ENCODE measurements at regions of chr14 and their contacts with region 1.

Region 1: GRCh38 chr14:61694830-61695694 is at the start of gene HIF1A:
- DNase-seq: peak; percentile 99
- H3K4me3 Mint-ChIP-seq: peak within 1 kb of the TSS; percentile 98
- H3K27ac Mint-ChIP-seq: peak within 1 kb of the TSS; percentile 98
- H3K4me1 Mint-ChIP-seq: peaks cover 49% of the 10 kb centered on the region
- H3K27me3 Mint-ChIP-seq: no peaks in the 10 kb centered on the region
- total RNA-seq, gene HIF1A: 283 to 287 TPM

Region 2: DNA sequence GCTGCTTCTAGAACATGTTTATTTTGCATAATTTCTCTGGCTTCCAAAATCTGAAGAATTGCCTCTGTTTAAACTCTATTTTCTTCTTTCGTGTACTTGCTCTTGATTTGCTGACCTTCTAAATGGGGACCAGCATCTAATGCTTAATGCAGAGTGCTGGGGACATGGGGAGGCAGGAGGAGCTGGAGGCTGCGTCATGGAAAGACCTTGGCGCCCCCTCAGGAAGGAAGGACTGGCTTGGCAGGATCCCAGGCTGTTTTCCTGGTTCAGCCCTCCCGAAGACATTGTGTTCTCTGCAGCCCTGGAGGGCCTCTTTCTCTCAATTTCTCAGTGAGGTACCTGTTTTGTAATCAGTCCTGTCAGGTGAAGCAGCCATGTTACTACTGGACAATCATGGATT is 368.2 kb before region 1 on chr14:
- CTCF ChIA-PET with region 1: no interaction called
- POLR2A ChIA-PET with region 1: interaction called, 31 read pairs
- intact Hi-C with region 1: loop called (anchors 2 kb)
- DNase-seq: no peak
- H3K4me3 Mint-ChIP-seq: peak overlapping the region; percentile 99
- H3K27ac Mint-ChIP-seq: peak overlapping the region; percentile 93
- H3K4me1 Mint-ChIP-seq: peaks cover 64% of the 10 kb centered on the region
- H3K27me3 Mint-ChIP-seq: no peaks in the 10 kb centered on the region

Region 3: DNA sequence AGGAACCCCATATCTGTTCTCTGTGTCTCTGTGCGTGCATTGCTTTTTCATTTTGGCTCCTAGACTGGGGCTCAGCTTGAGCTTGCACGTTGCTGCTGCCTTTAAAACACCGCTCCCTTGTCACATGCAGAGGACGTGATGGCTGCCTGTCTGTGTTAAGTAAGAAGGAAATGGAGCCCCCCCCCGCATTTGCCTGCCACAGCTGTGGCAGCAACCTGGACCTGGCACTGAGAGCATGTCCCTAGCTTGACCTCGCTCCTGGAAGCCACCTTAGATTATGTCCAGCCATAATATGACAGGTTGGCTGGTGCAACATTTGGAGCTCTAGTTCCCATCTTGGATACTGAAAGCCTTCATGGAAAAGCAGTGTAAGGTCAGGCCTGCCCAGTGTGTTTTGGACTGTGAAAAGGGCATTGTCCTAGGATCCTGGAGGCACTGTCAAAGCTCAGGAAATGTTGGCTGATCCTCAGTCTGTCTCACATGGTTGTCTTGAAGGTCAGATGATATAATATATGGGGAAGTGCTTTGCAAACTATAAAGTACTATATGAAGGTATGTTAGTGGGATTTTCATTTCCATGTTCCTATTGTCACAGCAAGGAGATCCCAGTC is 299.8 kb before region 1 on chr14:
- CTCF ChIA-PET with region 1: no interaction called
- POLR2A ChIA-PET with region 1: no interaction called
- intact Hi-C with region 1: no loop called
- DNase-seq: no peak
- H3K4me3 Mint-ChIP-seq: no peak overlapping the region
- H3K27ac Mint-ChIP-seq: no peak overlapping the region
- H3K4me1 Mint-ChIP-seq: peaks cover 78% of the 10 kb centered on the region
- H3K27me3 Mint-ChIP-seq: no peaks in the 10 kb centered on the region

Region 4: GRCh38 chr14:61503167-61503801 is 191.8 kb before region 1 on chr14:
- CTCF ChIA-PET with region 1: no interaction called
- POLR2A ChIA-PET with region 1: interaction called, 7 read pairs
- intact Hi-C with region 1: loop called (anchors 1 kb)
- DNase-seq: peak; percentile 90
- H3K4me3 Mint-ChIP-seq: peak overlapping the region; percentile 62
- H3K27ac Mint-ChIP-seq: peak overlapping the region; percentile 98
- H3K4me1 Mint-ChIP-seq: peaks cover 98% of the 10 kb centered on the region
- H3K27me3 Mint-ChIP-seq: no peaks in the 10 kb centered on the region

Region 5: GRCh38 chr14:61512026-61512834 is 182.8 kb before region 1 on chr14:
- CTCF ChIA-PET with region 1: no interaction called
- POLR2A ChIA-PET with region 1: interaction called, 15 read pairs
- intact Hi-C with region 1: no loop called
- DNase-seq: no peak
- H3K4me3 Mint-ChIP-seq: peak overlapping the region; percentile 51
- H3K27ac Mint-ChIP-seq: peak overlapping the region; percentile 98
- H3K4me1 Mint-ChIP-seq: peaks cover 95% of the 10 kb centered on the region
- H3K27me3 Mint-ChIP-seq: no peaks in the 10 kb centered on the region

Region 6: DNA sequence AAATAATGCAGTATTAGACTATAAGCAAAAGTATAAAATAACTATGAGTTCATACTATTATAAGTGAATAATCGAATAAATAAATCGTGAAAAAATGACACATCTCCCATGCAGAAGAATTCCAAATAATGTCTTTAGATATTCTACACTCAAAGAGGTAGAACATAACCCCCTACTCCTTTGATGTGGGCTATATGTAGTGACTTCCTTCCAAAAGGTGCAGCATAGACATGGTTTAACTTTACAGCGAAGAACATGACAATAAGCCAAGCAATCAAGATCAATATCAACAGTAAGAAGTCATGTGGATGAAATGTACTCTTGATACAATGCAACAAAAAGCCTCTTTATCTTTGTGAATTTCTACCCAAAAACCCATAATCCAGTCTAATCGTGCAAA is 45.8 kb before region 1 on chr14:
- CTCF ChIA-PET with region 1: no interaction called
- POLR2A ChIA-PET with region 1: no interaction called
- intact Hi-C with region 1: no loop called
- DNase-seq: no peak
- H3K4me3 Mint-ChIP-seq: no peak overlapping the region
- H3K27ac Mint-ChIP-seq: no peak overlapping the region
- H3K4me1 Mint-ChIP-seq: peaks cover 17% of the 10 kb centered on the region
- H3K27me3 Mint-ChIP-seq: no peaks in the 10 kb centered on the region

Region 7: GRCh38 chr14:61671082-61671481 is 24.0 kb before region 1 on chr14:
- CTCF ChIA-PET with region 1: interaction called, 3 read pairs
- POLR2A ChIA-PET with region 1: interaction called, 16 read pairs
- intact Hi-C with region 1: loop called (anchors 1 kb)
- DNase-seq: peak; percentile 65
- H3K4me3 Mint-ChIP-seq: no peak overlapping the region
- H3K27ac Mint-ChIP-seq: no peak overlapping the region
- H3K4me1 Mint-ChIP-seq: peaks cover 15% of the 10 kb centered on the region
- H3K27me3 Mint-ChIP-seq: no peaks in the 10 kb centered on the region